ENCODE measurements at regions of chr6 and their contacts with region 1.

Region 1: DNA sequence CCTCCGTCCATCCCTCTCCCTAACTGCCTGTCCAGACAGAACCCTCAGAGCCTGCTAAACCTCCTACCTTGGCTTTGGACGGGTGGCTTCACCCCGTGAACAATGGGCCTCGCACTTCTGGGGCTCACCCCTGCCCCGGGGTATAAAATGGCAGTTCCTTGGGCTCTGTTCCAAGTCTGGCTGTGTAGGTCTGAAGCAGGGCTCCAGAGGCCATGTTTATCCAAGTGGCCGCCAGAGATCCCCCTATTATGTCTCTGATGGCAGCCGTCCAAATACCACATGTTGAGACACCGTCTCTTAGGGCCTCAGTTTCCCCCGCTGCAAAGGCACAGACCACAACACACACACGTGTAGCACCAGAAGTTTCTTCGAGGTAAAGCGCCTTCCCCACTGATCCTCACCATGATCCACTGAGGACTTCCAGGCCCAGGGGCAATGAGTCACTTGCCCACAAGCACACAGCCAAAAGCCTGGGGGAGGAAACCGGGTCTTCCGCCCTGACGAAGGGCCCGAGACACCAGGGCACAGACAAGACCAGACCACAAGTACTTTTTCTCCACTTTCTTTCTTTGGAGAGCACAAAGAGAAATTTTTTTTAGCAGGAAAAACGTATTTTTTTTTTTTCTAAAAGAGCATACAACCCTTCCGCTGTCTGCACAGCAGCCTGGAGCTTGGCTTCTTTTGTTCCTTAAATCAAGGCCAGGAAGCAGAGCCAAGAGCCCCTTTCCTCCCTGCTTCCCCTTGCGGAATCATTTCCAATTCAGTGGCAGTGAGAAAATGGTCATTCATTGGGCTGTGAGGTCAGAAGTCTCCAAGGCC is 11.8 kb downstream of the CPNE5 start:
- DNase-seq: no peak
- ATAC-seq: no peak

Region 2: GRCh38 chr6:36788768-36789167 is 38.7 kb before region 1 on chr6:
- intact Hi-C with region 1: loop called (anchors 5 kb)
- DNase-seq: no peak
- ATAC-seq: no peak

Region 3: DNA sequence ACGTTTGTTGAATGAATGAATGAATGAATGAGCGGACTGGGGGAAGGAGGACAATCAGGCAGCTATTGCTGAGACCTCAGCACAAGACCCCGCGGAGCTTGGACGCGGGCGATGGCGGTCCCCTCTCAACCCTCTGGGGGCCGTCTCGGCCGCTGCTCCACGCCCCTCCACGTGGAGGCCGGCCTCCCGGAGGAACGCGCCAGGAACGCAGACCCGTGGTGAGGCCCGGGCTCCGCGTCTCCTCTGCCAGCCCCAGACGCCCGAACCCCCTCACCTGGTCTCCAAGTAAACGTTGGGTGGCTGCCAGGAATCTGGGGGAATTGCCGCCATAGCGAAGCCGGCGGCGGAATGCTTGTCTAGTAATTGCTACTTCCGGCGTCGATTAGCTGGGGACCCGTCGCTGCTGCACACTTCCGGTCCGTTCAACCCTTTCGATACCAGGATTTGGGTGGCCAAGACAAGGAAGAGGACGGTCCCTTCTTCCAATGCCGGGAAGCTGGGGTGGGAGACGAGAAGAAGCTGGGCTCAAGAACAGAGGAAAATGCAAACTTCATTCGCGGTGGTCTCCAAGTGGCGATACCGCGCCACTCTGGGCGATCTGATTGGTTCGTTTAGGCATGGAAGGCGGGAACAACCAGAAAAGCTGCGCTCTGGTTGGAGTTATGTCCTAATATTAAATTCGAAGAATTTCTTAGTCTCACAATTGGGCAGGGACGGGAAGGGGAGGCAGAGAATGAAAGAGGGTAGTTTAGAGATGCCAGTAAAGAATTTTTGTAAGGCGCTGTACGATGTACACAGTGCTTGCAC is 47.2 kb after region 1 on chr6 and contains the start of gene PPIL1:
- intact Hi-C with region 1: no loop called
- DNase-seq: peak; percentile 91
- ATAC-seq: peak; percentile 87
- total RNA-seq, gene PPIL1: 70.1 TPM

Measured in Right ventricle myocardium inferior (tissue), 1 donor.